ENCODE measurements at regions of chr4 and their contacts with region 1.

Region 1: DNA sequence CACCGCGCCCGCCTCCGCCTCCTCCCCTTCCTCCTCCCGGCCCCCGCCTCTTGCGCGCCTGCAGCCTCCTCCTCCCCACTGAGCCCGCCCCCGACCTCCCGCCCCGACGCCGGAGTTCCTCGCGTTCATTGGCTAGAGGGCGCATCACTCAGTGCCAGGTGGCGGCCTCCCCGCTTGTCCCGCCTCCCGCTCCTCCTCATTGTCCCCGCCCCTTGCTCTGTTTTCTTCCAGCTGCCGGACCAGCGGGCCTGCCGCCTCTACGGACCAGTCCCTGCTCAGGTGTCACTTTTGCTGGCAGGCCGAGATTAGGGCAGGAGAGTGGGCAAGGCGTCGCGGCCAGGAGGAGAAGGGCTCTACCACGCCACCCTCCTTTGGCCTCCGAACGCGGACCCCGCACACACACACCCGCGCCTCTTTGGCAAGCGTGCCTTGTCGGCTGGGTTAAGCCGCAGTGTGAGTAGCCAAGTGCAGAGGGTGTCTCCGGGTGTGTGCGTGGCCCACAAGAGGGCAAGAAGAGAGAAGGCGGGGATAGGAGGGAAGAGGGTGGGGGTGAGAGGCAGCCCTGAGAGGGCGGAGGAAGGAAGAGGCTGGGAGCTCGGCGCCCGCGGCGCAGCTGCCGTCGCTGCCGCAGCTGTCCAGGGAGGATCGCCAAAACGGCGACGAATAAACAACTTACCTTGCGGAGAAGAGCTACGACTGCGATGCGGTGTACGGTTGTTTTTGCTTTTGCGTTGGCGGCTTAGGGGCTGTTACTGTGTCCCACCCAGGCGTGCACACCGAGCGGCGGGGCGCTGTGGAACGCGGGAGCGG is 436 bp upstream of the PPP3CA start:
- DNase-seq: peak; percentile 98
- ATAC-seq: peak; percentile 82
- H3K4me3 Mint-ChIP-seq: peak overlapping the region; percentile 94
- H3K27ac Mint-ChIP-seq: peak overlapping the region; percentile 95
- H3K4me1 Mint-ChIP-seq: peaks cover 39% of the 10 kb centered on the region
- H3K27me3 Mint-ChIP-seq: no peaks in the 10 kb centered on the region
- CTCF ChIP-seq: no peak

Region 2: GRCh38 chr4:100494166-100494825 is 853.5 kb before region 1 on chr4:
- CTCF ChIA-PET with region 1: no interaction called
- POLR2A ChIA-PET with region 1: no interaction called
- intact Hi-C with region 1: no loop called
- DNase-seq: no peak
- ATAC-seq: no peak
- H3K4me3 Mint-ChIP-seq: no peak overlapping the region
- H3K27ac Mint-ChIP-seq: no peak overlapping the region
- H3K4me1 Mint-ChIP-seq: no peaks in the 10 kb centered on the region
- H3K27me3 Mint-ChIP-seq: peaks cover 4% of the 10 kb centered on the region
- CTCF ChIP-seq: no peak

Region 3: GRCh38 chr4:101020956-101021355 is 326.8 kb before region 1 on chr4:
- CTCF ChIA-PET with region 1: interaction called, 5 read pairs
- POLR2A ChIA-PET with region 1: no interaction called
- intact Hi-C with region 1: loop called (anchors 2 kb)
- DNase-seq: no peak
- ATAC-seq: peak; percentile 72
- H3K4me3 Mint-ChIP-seq: no peak overlapping the region
- H3K27ac Mint-ChIP-seq: peak overlapping the region; percentile 18
- H3K4me1 Mint-ChIP-seq: peaks cover 36% of the 10 kb centered on the region
- H3K27me3 Mint-ChIP-seq: no peaks in the 10 kb centered on the region
- CTCF ChIP-seq: no peak

Region 4: DNA sequence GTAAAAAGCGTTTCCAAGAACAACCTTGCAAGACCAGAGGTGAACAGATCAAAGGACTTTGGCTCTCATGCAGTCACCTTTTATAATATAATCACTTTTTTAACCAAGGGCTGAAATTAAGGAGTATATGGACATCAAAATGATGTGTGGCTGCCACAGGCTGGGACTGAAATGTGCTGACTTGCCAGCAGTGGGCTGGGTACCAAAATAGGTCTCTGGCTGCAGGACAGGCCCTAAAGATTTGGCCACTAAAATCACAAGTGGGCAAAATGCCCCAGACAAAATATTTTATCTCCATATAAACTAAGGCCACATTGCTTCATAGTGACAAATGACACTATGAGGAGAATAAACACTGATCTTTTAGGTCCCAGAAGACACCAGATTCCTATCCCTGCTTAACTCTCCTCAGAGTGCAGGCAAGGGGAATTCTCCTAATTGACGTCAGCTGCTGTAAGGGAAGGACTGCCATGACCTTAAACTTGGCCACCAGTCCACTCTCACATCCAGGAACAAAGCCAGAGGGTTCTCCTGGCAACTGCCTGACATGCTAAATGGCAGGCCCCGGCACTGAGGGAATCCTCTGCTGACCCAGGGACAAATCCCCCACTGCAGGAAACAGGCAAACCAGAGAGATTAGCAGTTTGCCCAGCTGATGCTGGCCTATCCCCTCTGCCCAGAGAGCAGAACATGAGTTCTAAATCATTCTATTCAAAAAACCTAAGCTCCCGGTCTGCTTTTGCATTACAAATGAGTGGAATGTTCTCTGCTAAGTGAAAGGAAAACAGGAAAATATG is 156.3 kb before region 1 on chr4:
- CTCF ChIA-PET with region 1: no interaction called
- POLR2A ChIA-PET with region 1: interaction called, 4 read pairs
- intact Hi-C with region 1: loop called (anchors 1 kb)
- DNase-seq: no peak
- ATAC-seq: no peak
- H3K4me3 Mint-ChIP-seq: no peak overlapping the region
- H3K27ac Mint-ChIP-seq: peak overlapping the region; percentile 50
- H3K4me1 Mint-ChIP-seq: peaks cover 47% of the 10 kb centered on the region
- H3K27me3 Mint-ChIP-seq: no peaks in the 10 kb centered on the region
- CTCF ChIP-seq: no peak

Region 5: DNA sequence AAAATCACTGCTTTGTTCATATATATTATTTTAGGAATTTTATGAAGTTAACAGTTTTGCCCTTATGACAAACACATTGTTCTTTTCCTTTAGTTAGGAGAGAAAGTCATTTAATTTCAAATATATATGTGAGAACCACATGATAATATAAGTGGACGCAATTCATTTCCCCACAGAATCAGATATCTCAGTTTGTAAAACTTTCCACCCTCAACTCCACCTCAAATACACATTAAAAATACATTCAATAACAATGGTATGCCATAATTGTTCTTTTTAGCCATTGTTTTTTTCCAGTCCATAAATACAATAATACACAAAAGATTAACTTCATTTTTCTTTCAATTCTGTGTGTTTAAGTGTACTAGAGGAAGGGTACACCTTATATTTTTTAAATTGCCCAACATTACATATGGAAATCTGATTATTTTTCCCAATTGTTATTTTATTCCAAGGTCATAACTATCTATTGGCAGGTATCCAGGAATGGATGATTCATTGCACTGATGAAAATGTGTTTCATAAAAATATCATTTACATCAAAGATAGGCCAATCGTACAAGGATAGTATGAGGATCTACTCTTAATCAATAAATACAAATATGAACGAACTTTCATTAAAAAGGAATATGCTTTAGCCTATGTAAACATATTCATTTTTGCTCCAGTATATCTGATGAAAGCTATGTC is 125.5 kb before region 1 on chr4:
- CTCF ChIA-PET with region 1: no interaction called
- POLR2A ChIA-PET with region 1: no interaction called
- intact Hi-C with region 1: no loop called
- DNase-seq: no peak
- ATAC-seq: no peak
- H3K4me3 Mint-ChIP-seq: no peak overlapping the region
- H3K27ac Mint-ChIP-seq: no peak overlapping the region
- H3K4me1 Mint-ChIP-seq: peaks cover 71% of the 10 kb centered on the region
- H3K27me3 Mint-ChIP-seq: no peaks in the 10 kb centered on the region
- CTCF ChIP-seq: no peak

Region 6: DNA sequence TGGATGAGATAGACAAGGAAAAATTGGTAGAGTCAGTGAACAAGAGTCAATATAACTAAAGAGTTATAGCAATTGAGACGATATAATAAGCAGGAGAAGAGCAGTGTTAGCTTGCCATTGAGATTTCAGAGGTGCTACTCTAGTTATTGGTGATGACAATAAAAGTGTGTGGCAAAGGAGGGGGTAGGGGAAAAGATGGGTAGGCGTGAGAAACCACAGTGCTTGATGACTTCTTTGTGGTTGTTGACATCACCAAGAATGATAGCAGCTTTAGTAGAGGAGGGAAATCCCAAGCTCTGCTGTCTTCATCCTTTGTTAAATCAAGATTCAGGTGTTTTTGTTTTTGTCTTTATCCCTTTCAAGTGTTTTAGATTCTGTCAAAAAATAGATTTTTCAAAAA is 179.4 kb after region 1 on chr4:
- CTCF ChIA-PET with region 1: no interaction called
- POLR2A ChIA-PET with region 1: interaction called, 7 read pairs
- intact Hi-C with region 1: loop called (anchors 5 kb)
- DNase-seq: no peak
- ATAC-seq: peak; percentile 98
- H3K4me3 Mint-ChIP-seq: no peak overlapping the region
- H3K27ac Mint-ChIP-seq: peak overlapping the region; percentile 9
- H3K4me1 Mint-ChIP-seq: peaks cover 15% of the 10 kb centered on the region
- H3K27me3 Mint-ChIP-seq: no peaks in the 10 kb centered on the region
- CTCF ChIP-seq: no peak

Region 7: GRCh38 chr4:101790521-101791188 is 442.9 kb after region 1 on chr4 and contains the start of gene BANK1:
- CTCF ChIA-PET with region 1: no interaction called
- POLR2A ChIA-PET with region 1: interaction called, 27 read pairs
- intact Hi-C with region 1: loop called (anchors 1 kb)
- DNase-seq: peak; percentile 86
- ATAC-seq: peak; percentile 89
- H3K4me3 Mint-ChIP-seq: peak within 1 kb of the TSS; percentile 97
- H3K27ac Mint-ChIP-seq: peak within 1 kb of the TSS; percentile 99
- H3K4me1 Mint-ChIP-seq: peaks cover 66% of the 10 kb centered on the region
- H3K27me3 Mint-ChIP-seq: no peaks in the 10 kb centered on the region
- CTCF ChIP-seq: peak; percentile 37
- total RNA-seq, gene BANK1: 307 and 336 TPM in 2 replicates

Region 8: DNA sequence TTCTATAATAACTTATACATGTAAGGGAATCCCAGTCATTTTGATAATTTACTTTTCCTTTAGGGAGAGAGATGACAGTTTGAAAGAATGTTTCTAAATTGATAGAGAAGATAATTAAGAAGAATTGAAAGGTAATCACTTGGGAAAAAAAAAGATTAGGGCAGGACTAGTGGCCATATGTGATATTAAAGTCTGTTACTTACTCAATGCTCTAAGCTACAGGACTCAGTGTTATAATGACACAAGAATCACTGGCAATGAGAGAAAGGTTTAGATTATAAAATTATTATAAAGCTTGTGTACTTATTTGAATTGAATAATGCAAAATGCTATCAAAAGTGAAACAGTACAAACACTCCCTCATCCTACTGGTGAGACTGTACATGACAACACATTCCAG is 708.0 kb after region 1 on chr4:
- CTCF ChIA-PET with region 1: no interaction called
- POLR2A ChIA-PET with region 1: no interaction called
- intact Hi-C with region 1: loop called (anchors 5 kb)
- DNase-seq: no peak
- ATAC-seq: no peak
- H3K4me3 Mint-ChIP-seq: no peak overlapping the region
- H3K27ac Mint-ChIP-seq: no peak overlapping the region
- H3K4me1 Mint-ChIP-seq: peaks cover 18% of the 10 kb centered on the region
- H3K27me3 Mint-ChIP-seq: no peaks in the 10 kb centered on the region
- CTCF ChIP-seq: no peak